Natural killer cell (primary cell): ENCODE measurements at regions of chrX and their contacts with region 1.

Region 1: GRCh38 chrX:47361538-47362511 is 8.6 kb upstream of the ZNF157 start:
- DNase-seq: peak; percentile 55 to 74
- ATAC-seq: peak; percentile 74 to 92 (median 81)
- H3K4me3 ChIP-seq: peak overlapping the region; percentile 37
- H3K4me3 Mint-ChIP-seq: peak overlapping the region; percentile 80
- H3K27ac ChIP-seq: peak overlapping the region; percentile 84
- H3K27ac Mint-ChIP-seq: peak overlapping the region; percentile 91 to 97
- H3K4me1 ChIP-seq: peaks cover 31% of the 10 kb centered on the region
- H3K4me1 Mint-ChIP-seq: peaks cover 35 to 37% of the 10 kb centered on the region in 2 donors
- H3K27me3 ChIP-seq: no peaks in the 10 kb centered on the region
- H3K27me3 Mint-ChIP-seq: peaks cover 0 to 8% of the 10 kb centered on the region in 2 donors
- CTCF ChIP-seq: no peak

Region 2: DNA sequence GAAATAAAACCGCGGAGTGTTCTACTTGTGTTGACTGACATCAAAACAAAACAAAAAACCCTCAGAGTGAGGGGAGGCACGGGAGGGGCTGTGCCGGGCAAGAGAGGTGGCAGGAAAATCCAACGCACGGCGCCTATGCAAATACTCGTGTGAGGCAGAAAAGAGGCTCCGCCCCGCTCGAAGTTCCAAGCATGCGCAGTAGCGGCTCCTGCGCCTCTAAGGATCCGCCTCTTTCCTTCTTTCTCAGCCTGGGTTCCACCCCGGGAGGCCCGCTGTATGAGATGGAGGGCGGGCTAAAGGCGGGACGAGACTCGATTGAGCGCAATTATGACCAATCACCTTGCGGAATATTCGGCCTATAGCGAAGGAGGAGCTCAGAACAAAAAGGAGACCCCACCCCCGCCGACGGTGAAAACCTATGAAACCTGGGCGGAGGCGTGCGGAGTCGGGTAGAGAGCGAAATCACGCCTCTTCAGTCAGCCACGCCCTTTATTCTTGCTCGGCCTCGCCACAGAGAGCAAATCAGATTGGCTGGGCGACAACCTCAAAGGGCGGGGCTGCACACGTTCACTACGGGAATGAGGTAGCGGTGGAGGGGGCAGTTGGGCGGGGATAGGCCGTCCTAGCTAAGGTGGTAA is 144.1 kb before region 1 on chrX:
- intact Hi-C with region 1: loop called (anchors 5 kb)
- DNase-seq: peak; percentile 85 to 96
- ATAC-seq: peak; percentile 77 to 91 (median 77)
- H3K4me3 ChIP-seq: peak overlapping the region; percentile 76
- H3K4me3 Mint-ChIP-seq: peak overlapping the region; percentile 94
- H3K27ac ChIP-seq: peak overlapping the region; percentile 100
- H3K27ac Mint-ChIP-seq: peak overlapping the region; percentile 95 to 98
- H3K4me1 ChIP-seq: peaks cover 25% of the 10 kb centered on the region
- H3K4me1 Mint-ChIP-seq: peaks cover 36 to 50% of the 10 kb centered on the region in 2 donors
- H3K27me3 ChIP-seq: no peaks in the 10 kb centered on the region
- H3K27me3 Mint-ChIP-seq: no peaks in the 10 kb centered on the region
- CTCF ChIP-seq: no peak

Region 3: GRCh38 chrX:47482512-47483309 is 120.9 kb after region 1 on chrX and contains the start of gene ZNF41:
- intact Hi-C with region 1: loop called (anchors 10 kb)
- DNase-seq: peak; percentile 64 to 90
- ATAC-seq: peak; percentile 78 to 93 (median 84)
- H3K4me3 ChIP-seq: peak within 1 kb of the TSS; percentile 93
- H3K4me3 Mint-ChIP-seq: peak within 1 kb of the TSS; percentile 88
- H3K27ac ChIP-seq: peak within 1 kb of the TSS; percentile 96
- H3K27ac Mint-ChIP-seq: peak within 1 kb of the TSS; percentile 85
- H3K4me1 ChIP-seq: peaks cover 11% of the 10 kb centered on the region
- H3K4me1 Mint-ChIP-seq: peaks cover 21 to 28% of the 10 kb centered on the region in 2 donors
- H3K27me3 ChIP-seq: no peaks in the 10 kb centered on the region
- H3K27me3 Mint-ChIP-seq: no peaks in the 10 kb centered on the region
- CTCF ChIP-seq: no peak
- total RNA-seq, gene ZNF41: 7.9 to 11.8 (median 10.0) TPM

Region 4: GRCh38 chrX:47836164-47837072 is 474.6 kb after region 1 on chrX and contains the start of gene ZNF81:
- intact Hi-C with region 1: loop called (anchors 10 kb)
- DNase-seq: peak; percentile 87 to 95
- ATAC-seq: peak; percentile 88 to 94 (median 90)
- H3K4me3 ChIP-seq: peak within 1 kb of the TSS; percentile 74
- H3K4me3 Mint-ChIP-seq: peak within 1 kb of the TSS; percentile 91
- H3K27ac ChIP-seq: peak within 1 kb of the TSS; percentile 79
- H3K27ac Mint-ChIP-seq: peak within 1 kb of the TSS; percentile 93 to 99
- H3K4me1 ChIP-seq: peaks cover 4% of the 10 kb centered on the region
- H3K4me1 Mint-ChIP-seq: peaks cover 20% of the 10 kb centered on the region in 2 donors
- H3K27me3 ChIP-seq: no peaks in the 10 kb centered on the region
- H3K27me3 Mint-ChIP-seq: peaks cover 0 to 7% of the 10 kb centered on the region in 2 donors
- CTCF ChIP-seq: no peak
- total RNA-seq, gene ZNF81: 20.9 to 23.7 (median 21.2) TPM